ENCODE measurements at regions of chr5 and their contacts with region 1.

Region 1: DNA sequence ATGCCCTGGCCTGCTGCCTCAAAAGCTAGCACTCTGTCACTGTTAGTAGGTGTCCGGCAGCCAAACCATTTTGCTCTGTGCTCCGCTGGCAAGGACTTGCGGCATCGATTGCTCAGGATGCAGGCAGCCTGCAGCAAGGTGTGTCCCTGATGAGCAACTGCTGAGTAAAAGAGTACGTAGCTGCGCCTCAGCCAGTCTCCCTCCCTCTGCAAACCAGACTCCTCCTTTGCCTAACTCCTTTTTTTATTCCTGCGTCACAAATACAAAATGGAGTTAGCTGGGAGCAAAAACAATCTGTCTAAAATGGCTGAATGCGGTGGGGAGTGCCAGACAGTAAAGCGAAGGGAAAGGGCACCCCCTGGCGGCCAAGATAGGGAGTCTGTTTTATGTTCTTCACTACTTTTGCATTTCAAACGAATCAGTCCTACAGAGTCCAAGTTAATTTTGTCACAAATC is 61.1 kb downstream of the DIAPH1 start:
- DNase-seq: peak; percentile 66 to 76
- H3K4me3 ChIP-seq: no peak overlapping the region
- H3K4me3 Mint-ChIP-seq: no peak overlapping the region
- H3K27ac Mint-ChIP-seq: peak overlapping the region; percentile 81
- H3K4me1 ChIP-seq: no peaks in the 10 kb centered on the region
- H3K4me1 Mint-ChIP-seq: peaks cover 16% of the 10 kb centered on the region
- H3K27me3 ChIP-seq: no peaks in the 10 kb centered on the region
- H3K27me3 Mint-ChIP-seq: no peaks in the 10 kb centered on the region
- CTCF ChIP-seq: peak; percentile 67 to 81

Region 2: DNA sequence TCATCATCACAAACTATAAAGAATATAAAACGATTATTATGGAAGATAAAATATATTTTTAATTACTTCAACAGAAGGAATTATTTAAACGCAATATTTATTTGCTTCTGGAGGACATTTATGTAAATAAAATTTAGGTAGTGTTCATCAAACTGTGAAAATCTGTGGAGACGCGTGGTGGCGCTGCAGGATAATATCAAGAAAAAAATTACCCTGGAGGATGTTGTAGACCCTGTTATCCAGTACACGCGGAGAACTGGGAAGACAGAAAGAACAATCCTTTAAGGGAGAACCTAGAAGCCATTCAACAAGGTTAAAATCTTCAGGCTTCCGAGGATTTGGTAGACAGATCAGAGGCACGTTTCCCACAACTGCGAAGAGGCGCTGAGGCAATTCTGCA is 349.2 kb before region 1 on chr5 and contains the start of gene PCDHB12:
- CTCF ChIA-PET with region 1: no interaction called
- POLR2A ChIA-PET with region 1: no interaction called
- intact Hi-C with region 1: no loop called
- DNase-seq: no peak
- H3K4me3 ChIP-seq: no peak within 1 kb of the TSS
- H3K4me3 Mint-ChIP-seq: no peak within 1 kb of the TSS
- H3K27ac Mint-ChIP-seq: no peak within 1 kb of the TSS
- H3K4me1 ChIP-seq: no peaks in the 10 kb centered on the region
- H3K4me1 Mint-ChIP-seq: no peaks in the 10 kb centered on the region
- H3K27me3 ChIP-seq: no peaks in the 10 kb centered on the region
- H3K27me3 Mint-ChIP-seq: no peaks in the 10 kb centered on the region
- CTCF ChIP-seq: no peak
- total RNA-seq, gene PCDHB12: 0.12 TPM in 1 of 2 replicates, not detected in the other

Region 3: DNA sequence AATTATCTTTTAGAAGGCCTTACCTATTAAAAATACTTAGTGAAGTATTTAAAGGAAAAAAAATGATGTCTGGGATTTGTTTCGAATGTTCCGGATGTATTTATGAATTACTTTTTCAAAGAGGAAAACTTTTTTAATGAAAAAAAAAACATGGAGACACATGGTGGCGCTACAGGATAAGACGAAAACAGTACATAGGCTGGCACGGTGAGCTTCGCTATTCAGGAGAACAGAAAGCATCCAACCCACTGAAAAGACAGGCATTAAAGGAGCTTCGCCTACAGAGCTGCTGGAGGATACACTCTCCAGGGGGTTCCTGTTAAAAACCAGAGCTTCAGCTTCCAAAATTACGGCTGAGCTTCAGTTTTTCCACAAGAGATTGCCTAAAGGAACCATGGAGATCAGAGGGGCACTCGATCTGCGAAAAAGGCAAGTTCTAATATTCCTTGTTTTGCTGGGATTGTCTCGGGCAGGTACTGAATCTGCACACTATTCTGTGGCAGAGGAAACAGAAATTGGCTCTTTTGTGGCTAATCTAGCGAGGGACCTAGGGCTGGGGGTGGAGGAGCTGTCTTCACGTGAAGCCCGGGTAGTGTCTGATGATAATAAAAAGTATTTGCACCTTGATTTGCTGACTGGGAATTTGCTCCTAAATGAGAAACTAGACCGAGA is 334.5 kb before region 1 on chr5 and contains the start of gene PCDHB14:
- CTCF ChIA-PET with region 1: interaction called, 11 read pairs
- POLR2A ChIA-PET with region 1: no interaction called
- intact Hi-C with region 1: loop called (anchors 1 kb)
- DNase-seq: peak in 1 of 2 experiments; percentile 28
- H3K4me3 ChIP-seq: peak within 1 kb of the TSS; percentile 32
- H3K4me3 Mint-ChIP-seq: peak within 1 kb of the TSS; percentile 58
- H3K27ac Mint-ChIP-seq: no peak within 1 kb of the TSS
- H3K4me1 ChIP-seq: no peaks in the 10 kb centered on the region
- H3K4me1 Mint-ChIP-seq: no peaks in the 10 kb centered on the region
- H3K27me3 ChIP-seq: no peaks in the 10 kb centered on the region
- H3K27me3 Mint-ChIP-seq: no peaks in the 10 kb centered on the region
- CTCF ChIP-seq: peak; percentile 21 to 29
- total RNA-seq, gene PCDHB14: 0.41 and 0.44 TPM in 2 replicates

Region 4: DNA sequence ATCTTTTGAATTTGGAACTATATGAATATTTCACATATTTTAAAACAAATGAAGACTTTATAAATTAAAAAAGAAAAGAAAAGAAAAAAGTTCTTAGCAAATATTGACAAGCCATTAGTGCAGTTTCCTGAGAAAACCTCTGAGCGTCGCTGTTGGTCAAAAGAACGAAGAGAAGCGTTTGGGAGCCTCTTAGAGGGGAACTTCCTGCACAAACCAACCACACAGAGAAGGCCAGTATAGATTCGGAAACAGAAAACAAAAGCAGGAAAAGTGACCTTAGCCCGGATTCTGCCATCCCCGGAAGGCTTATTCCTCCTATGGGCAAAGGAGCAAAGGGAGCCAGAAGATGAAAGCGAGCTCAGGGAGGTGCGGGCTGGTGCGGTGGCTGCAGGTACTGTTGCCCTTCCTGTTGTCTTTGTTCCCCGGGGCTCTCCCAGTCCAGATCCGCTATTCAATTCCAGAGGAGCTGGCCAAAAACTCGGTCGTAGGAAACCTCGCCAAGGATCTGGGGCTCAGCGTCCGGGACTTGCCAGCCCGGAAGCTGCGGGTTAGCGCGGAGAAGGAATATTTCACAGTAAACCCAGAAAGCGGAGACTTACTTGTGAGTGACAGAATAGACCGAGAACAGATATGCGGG is 197.8 kb before region 1 on chr5 and contains the start of gene PCDHGB2:
- CTCF ChIA-PET with region 1: no interaction called
- POLR2A ChIA-PET with region 1: no interaction called
- intact Hi-C with region 1: loop called (anchors 1 kb)
- DNase-seq: peak in 1 of 2 experiments; percentile 15
- H3K4me3 ChIP-seq: no peak within 1 kb of the TSS
- H3K4me3 Mint-ChIP-seq: peak within 1 kb of the TSS; percentile 36
- H3K27ac Mint-ChIP-seq: peak within 1 kb of the TSS; percentile 31
- H3K4me1 ChIP-seq: no peaks in the 10 kb centered on the region
- H3K4me1 Mint-ChIP-seq: no peaks in the 10 kb centered on the region
- H3K27me3 ChIP-seq: no peaks in the 10 kb centered on the region
- H3K27me3 Mint-ChIP-seq: no peaks in the 10 kb centered on the region
- CTCF ChIP-seq: peak; percentile 40 to 47
- total RNA-seq, gene PCDHGB2: 1.00 and 1.3 TPM in 2 replicates

Region 5: DNA sequence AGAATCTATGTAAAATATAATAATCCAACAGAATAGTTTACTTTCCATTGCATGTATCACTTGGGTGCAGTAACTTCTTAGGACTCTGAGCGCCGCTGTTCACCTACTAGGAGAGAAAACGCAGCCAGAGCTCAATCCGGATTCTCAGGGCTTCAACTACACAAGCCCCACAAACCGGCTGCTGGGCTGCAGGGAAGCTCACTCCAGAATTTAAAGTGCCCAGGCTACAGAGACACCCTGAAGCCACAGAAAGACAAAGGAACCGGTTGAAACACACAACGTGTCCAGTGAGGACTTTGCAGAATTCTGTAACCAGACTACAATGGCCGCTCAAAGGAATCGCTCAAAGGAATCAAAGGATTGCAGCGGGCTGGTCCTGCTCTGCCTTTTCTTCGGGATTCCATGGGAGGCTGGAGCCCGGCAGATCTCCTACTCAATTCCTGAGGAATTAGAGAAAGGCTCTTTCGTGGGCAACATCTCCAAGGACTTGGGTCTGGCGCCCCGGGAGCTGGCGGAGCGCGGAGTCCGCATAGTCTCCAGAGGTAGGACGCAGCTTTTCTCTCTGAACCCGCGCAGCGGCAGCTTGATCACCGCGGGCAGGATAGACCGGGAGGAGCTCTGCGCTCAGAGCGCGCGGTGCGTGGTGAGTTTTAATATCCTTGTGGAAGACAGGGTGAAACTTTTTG is 144.7 kb before region 1 on chr5 and contains the start of gene PCDHGA10:
- CTCF ChIA-PET with region 1: interaction called, 7 read pairs
- POLR2A ChIA-PET with region 1: no interaction called
- intact Hi-C with region 1: loop called (anchors 1 kb)
- DNase-seq: peak in 1 of 2 experiments; percentile 50
- H3K4me3 ChIP-seq: peak within 1 kb of the TSS; percentile 49
- H3K4me3 Mint-ChIP-seq: peak within 1 kb of the TSS; percentile 86
- H3K27ac Mint-ChIP-seq: no peak within 1 kb of the TSS
- H3K4me1 ChIP-seq: no peaks in the 10 kb centered on the region
- H3K4me1 Mint-ChIP-seq: no peaks in the 10 kb centered on the region
- H3K27me3 ChIP-seq: no peaks in the 10 kb centered on the region
- H3K27me3 Mint-ChIP-seq: no peaks in the 10 kb centered on the region
- CTCF ChIP-seq: peak; percentile 50 to 55
- total RNA-seq, gene PCDHGA10: 2.9 and 3.6 TPM in 2 replicates

Region 6: GRCh38 chr5:141799507-141800167 is 241.9 kb after region 1 on chr5:
- CTCF ChIA-PET with region 1: no interaction called
- POLR2A ChIA-PET with region 1: no interaction called
- intact Hi-C with region 1: no loop called
- DNase-seq: no peak
- H3K4me3 ChIP-seq: no peak overlapping the region
- H3K4me3 Mint-ChIP-seq: no peak overlapping the region
- H3K27ac Mint-ChIP-seq: no peak overlapping the region
- H3K4me1 ChIP-seq: no peaks in the 10 kb centered on the region
- H3K4me1 Mint-ChIP-seq: no peaks in the 10 kb centered on the region
- H3K27me3 ChIP-seq: no peaks in the 10 kb centered on the region
- H3K27me3 Mint-ChIP-seq: peaks cover 2% of the 10 kb centered on the region
- CTCF ChIP-seq: no peak

Region 7: GRCh38 chr5:142197098-142197497 is 639.4 kb after region 1 on chr5:
- CTCF ChIA-PET with region 1: no interaction called
- POLR2A ChIA-PET with region 1: no interaction called
- intact Hi-C with region 1: no loop called
- DNase-seq: no peak
- H3K4me3 ChIP-seq: no peak overlapping the region
- H3K4me3 Mint-ChIP-seq: no peak overlapping the region
- H3K27ac Mint-ChIP-seq: no peak overlapping the region
- H3K4me1 ChIP-seq: peaks cover 8% of the 10 kb centered on the region
- H3K4me1 Mint-ChIP-seq: no peaks in the 10 kb centered on the region
- H3K27me3 ChIP-seq: no peaks in the 10 kb centered on the region
- H3K27me3 Mint-ChIP-seq: no peaks in the 10 kb centered on the region
- CTCF ChIP-seq: no peak